Activated naive CD4-positive, alpha-beta T cell treated with anti-CD3 and anti-CD28 coated beads for 36 hours (primary cell): ENCODE measurements at regions of chr6 and their contacts with region 1.

Region 1: DNA sequence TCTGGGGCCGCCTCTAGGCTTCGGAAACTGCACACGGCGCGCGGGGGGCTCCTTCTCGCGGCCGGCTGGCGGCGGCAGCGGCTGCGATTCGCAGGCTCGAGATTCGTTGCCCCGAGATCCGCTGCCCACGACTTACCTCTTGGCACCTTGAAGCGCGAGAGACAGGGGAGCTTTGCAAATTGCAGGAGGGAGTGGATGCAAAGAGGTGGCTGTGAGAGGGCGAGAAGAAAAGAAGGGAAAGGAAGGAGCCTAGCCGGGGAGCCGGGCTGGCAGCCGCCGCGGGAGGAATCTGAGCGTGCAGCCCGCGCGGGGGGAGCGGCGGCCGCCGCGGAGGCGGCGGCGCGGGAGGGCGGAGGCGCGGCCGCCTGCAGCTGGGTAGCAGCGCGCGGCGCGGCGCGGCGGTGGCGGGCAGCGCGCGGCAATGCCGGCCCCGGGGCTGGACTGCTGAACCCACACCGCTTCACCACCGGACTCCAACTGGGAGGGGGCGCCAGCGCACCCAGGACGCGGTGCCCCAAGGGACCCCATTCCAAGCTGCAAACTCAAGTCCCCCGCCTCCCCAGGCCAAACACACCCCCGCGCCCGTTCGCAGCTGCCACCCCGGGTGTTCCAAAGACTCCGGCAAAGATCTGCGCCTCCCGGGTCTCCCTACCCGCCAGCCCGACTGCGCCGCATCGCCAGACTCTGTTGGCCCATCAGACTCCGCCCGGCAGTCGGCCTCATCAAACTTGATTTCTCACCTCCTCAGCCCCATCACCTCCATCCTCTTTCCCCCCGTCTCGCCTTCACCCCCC is 44.2 kb upstream of the SUPT3H start:
- DNase-seq: peak; percentile 62
- H3K4me3 Mint-ChIP-seq: peak overlapping the region; percentile 93
- H3K27ac Mint-ChIP-seq: peak overlapping the region; percentile 88
- H3K4me1 Mint-ChIP-seq: peaks cover 29% of the 10 kb centered on the region
- H3K27me3 Mint-ChIP-seq: peaks cover 13% of the 10 kb centered on the region

Region 2: GRCh38 chr6:44475779-44476434 is 946.0 kb before region 1 on chr6:
- CTCF ChIA-PET with region 1: no interaction called
- intact Hi-C with region 1: loop called (anchors 1 kb)
- DNase-seq: peak; percentile 81
- H3K4me3 Mint-ChIP-seq: no peak overlapping the region
- H3K27ac Mint-ChIP-seq: no peak overlapping the region
- H3K4me1 Mint-ChIP-seq: no peaks in the 10 kb centered on the region
- H3K27me3 Mint-ChIP-seq: no peaks in the 10 kb centered on the region

Region 3: DNA sequence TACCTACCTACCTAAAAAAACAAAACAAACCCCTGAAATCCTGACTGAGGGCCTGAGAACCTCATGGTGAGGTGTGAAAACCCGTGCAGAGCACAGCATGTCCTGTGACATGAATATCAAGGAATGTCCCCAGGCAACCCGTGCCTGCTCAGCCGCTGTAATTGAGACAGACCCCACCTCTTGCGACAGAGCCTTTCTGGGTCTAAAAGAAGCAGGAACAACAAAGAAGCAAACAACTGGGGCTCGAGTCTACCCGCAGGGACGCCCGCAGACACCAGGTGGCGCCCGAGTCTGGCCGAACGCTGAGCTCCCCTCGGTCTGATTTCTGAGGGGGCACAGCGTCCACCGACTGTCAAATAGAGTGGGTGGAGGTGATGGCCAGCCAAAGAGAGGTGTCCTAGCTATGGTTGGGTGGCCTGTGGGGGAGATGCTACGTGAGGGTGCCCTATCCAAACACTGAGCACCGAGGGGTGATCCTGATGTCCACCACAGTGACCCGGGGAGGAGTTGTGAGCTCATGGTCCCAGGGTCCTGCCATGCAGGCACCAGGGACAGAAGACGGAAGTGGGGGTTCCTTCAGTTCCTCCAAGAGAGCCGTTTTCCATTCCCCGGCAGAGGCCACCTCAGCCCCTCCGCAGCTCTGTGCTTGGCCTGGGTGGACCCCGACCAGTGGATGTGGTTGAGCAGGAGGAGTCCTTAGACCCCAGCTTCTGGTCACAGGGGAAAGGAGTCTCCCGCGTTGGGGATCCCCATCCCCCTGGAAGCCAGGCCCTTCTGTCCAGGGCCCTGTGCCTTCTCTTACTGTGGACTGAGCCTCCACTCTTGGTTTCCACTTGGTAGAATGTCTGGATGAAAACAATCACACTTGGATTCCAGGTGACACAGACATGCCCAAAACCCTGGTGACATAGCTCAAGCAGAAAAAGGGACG is 766.2 kb before region 1 on chr6:
- CTCF ChIA-PET with region 1: interaction called, 6 read pairs
- intact Hi-C with region 1: loop called (anchors 1 kb)
- DNase-seq: peak; percentile 81
- H3K4me3 Mint-ChIP-seq: peak overlapping the region; percentile 38
- H3K27ac Mint-ChIP-seq: peak overlapping the region; percentile 62
- H3K4me1 Mint-ChIP-seq: peaks cover 10% of the 10 kb centered on the region
- H3K27me3 Mint-ChIP-seq: no peaks in the 10 kb centered on the region

Region 4: GRCh38 chr6:44925100-44925739 is 496.7 kb before region 1 on chr6:
- CTCF ChIA-PET with region 1: interaction called, 3 read pairs
- intact Hi-C with region 1: loop called (anchors 2 kb)
- DNase-seq: peak; percentile 36
- H3K4me3 Mint-ChIP-seq: peak overlapping the region; percentile 0
- H3K27ac Mint-ChIP-seq: peak overlapping the region; percentile 16
- H3K4me1 Mint-ChIP-seq: peaks cover 53% of the 10 kb centered on the region
- H3K27me3 Mint-ChIP-seq: no peaks in the 10 kb centered on the region

Region 5: DNA sequence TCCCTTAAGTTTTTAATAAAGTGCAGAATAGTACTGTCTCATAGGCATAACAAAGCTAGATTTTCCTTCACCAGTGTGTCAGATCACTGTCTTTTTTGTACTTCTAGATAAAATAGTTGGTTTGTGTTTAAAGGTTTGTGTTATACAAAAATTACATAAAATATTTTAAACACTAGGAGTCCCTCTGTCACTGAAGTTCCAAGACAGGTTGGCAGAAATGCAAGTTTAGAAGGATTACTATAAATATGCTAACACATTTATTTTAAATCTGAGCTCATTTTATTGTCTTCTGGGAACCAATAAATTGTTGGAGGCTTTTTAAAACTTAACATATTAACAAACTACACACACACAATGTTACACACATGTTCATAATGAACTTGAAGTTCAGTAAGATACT is 124.6 kb before region 1 on chr6:
- CTCF ChIA-PET with region 1: interaction called, 3 read pairs
- intact Hi-C with region 1: loop called (anchors 2 kb)
- DNase-seq: no peak
- H3K4me3 Mint-ChIP-seq: no peak overlapping the region
- H3K27ac Mint-ChIP-seq: no peak overlapping the region
- H3K4me1 Mint-ChIP-seq: peaks cover 35% of the 10 kb centered on the region
- H3K27me3 Mint-ChIP-seq: no peaks in the 10 kb centered on the region

Region 6: GRCh38 chr6:45486736-45487135 is 64.8 kb after region 1 on chr6:
- CTCF ChIA-PET with region 1: interaction called, 4 read pairs
- intact Hi-C with region 1: loop called (anchors 2 kb)
- DNase-seq: peak; percentile 46
- H3K4me3 Mint-ChIP-seq: no peak overlapping the region
- H3K27ac Mint-ChIP-seq: peak overlapping the region; percentile 54
- H3K4me1 Mint-ChIP-seq: peaks cover 38% of the 10 kb centered on the region
- H3K27me3 Mint-ChIP-seq: no peaks in the 10 kb centered on the region

Region 7: GRCh38 chr6:45830441-45831139 is 408.7 kb after region 1 on chr6:
- CTCF ChIA-PET with region 1: no interaction called
- intact Hi-C with region 1: loop called (anchors 2 kb)
- DNase-seq: peak; percentile 76
- H3K4me3 Mint-ChIP-seq: peak overlapping the region; percentile 25
- H3K27ac Mint-ChIP-seq: peak overlapping the region; percentile 75
- H3K4me1 Mint-ChIP-seq: peaks cover 24% of the 10 kb centered on the region
- H3K27me3 Mint-ChIP-seq: peaks cover 6% of the 10 kb centered on the region